ENCODE measurements at regions of chr10 and their contacts with region 1.

Region 1: GRCh38 chr10:24873281-24873683 is 79.1 kb downstream of the PRTFDC1 start:
- DNase-seq: peak in 3 of 14 experiments; percentile 30 to 34 (median 31)
- ATAC-seq: no peak
- H3K4me3 ChIP-seq: no peak overlapping the region
- H3K4me3 Mint-ChIP-seq: no peak overlapping the region
- H3K27ac ChIP-seq: no peak overlapping the region
- H3K27ac Mint-ChIP-seq: no peak overlapping the region
- H3K4me1 ChIP-seq: peaks cover 3% of the 10 kb centered on the region
- H3K4me1 Mint-ChIP-seq: peaks cover 14% of the 10 kb centered on the region
- H3K27me3 ChIP-seq: no peaks in the 10 kb centered on the region
- H3K27me3 Mint-ChIP-seq: no peaks in the 10 kb centered on the region
- CTCF ChIP-seq: no peak

Region 2: DNA sequence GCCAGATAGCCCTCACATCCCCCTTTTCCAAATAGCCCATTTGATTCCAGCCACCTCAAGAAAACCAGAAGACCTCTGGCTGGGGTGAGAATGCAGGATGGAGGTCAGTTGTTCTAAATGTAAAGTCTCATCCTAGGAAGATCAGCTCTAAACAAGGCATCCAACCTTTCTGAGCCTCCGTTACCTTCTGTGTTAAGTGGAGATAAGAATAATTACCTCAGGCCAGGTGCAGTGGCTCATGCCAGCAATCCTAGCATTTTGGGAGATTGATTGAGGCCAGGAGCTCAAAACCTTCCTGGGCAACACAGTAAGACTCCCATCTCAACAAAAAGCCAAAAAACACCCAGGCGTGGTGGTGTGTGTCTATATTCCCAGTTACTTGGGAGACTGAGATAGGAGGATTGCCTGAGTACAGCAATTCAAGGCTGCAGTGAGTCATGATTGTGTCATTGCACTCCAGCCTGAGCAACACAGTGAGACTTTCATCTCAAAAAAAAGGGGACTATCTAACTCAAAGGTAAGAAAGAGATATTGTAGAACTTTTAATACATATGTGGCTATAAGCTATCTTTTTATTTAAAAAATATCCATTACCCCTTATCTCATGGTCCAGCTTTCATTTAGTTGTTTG is 35.6 kb after region 1 on chr10:
- CTCF ChIA-PET with region 1: no interaction called
- POLR2A ChIA-PET with region 1: no interaction called
- intact Hi-C with region 1: loop called in 1 of 2 experiments (anchors 5 kb)
- DNase-seq: peak in 2 of 14 experiments; percentile 40 to 51
- ATAC-seq: no peak
- H3K4me3 ChIP-seq: no peak overlapping the region
- H3K4me3 Mint-ChIP-seq: no peak overlapping the region
- H3K27ac ChIP-seq: no peak overlapping the region
- H3K27ac Mint-ChIP-seq: no peak overlapping the region
- H3K4me1 ChIP-seq: peaks cover 6% of the 10 kb centered on the region
- H3K4me1 Mint-ChIP-seq: peaks cover 9% of the 10 kb centered on the region
- H3K27me3 ChIP-seq: no peaks in the 10 kb centered on the region
- H3K27me3 Mint-ChIP-seq: no peaks in the 10 kb centered on the region
- CTCF ChIP-seq: no peak